Right lobe of liver (tissue), 6 donors: ENCODE measurements at regions of chr14 and their contacts with region 1.

Region 1: DNA sequence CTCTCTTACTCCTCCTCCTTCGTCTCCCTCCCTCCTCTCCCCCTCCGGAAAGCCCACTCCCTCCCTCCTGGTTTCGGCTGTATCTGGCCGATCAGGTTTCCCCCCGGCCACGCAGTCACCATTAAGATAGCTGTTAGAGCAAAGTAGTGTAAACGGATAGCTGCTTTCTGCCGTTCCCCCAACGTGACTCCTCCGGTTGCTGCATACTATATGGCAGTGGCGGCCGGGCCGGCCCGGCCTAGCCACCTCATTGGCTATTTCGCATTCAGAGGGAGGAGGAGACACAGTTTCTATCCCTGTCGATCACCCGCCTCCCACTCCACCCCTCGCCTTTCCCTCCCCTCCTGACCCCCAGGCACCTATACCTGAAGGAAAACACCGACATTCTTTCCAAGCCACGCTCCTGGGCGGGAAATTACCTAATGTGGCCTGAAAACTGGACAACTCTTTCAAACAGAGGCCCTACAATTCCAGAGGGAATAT is at the start of gene SIX4:
- DNase-seq: peak; percentile 48 to 59 (median 49)
- ATAC-seq: peak; percentile 57 to 81 (median 72)
- H3K4me3 ChIP-seq: peak within 1 kb of the TSS; percentile 53 to 56 (median 56)
- H3K27ac ChIP-seq: no peak within 1 kb of the TSS
- H3K4me1 ChIP-seq: peaks cover 0 to 13% (median 5%) of the 10 kb centered on the region in 4 donors
- H3K27me3 ChIP-seq: no peaks in the 10 kb centered on the region
- CTCF ChIP-seq: no peak
- POLR2A ChIP-seq: no peak
- total RNA-seq, gene SIX4: 0.04 to 0.43 (median 0.23) TPM in 5 of 6 experiments, not detected in the other

Region 2: DNA sequence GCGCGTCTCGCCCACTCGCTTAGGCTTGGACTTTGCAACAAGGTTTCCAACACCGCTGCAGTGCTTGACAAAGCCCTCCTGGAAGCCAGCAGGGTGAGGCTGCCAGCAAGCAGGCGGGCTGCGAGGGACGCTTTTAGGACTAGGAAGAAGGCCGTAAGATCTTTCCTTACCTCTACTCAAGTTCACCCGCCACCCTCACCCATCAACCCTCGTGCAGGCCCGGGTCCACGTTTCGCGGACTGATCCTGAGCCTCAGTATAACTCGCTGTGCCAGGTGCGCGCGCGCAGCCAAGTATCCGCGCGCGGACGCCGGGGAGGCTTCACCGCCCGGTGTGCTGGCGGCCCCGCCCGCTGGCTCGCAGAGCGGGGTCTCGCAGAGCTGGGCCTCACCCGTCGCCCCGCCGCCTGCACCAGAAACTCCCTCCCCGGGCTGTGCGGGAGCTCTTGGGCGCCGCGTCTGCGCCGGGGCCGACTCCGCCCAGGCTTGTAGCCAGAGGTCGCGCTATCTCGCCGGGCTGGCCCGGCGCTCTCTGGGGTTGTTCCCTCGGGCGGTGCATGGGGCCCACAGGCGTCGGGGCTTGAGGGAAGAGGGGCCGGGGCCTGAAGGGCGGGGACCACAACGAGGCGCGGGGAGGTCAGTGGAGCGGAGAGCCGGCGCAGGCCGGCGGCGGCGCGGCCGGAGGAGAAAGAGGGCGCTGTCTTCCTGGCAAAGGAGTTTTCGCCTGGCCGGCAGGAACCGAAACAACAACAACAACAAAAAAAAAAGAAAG is 67.3 kb before region 1 on chr14:
- intact Hi-C with region 1: loop called in 1 of 2 experiments (anchors 10 kb)
- DNase-seq: peak; percentile 59 to 68 (median 64)
- ATAC-seq: peak; percentile 86 to 92 (median 88)
- H3K4me3 ChIP-seq: peak overlapping the region; percentile 43 to 64 (median 59)
- H3K27ac ChIP-seq: no peak overlapping the region
- H3K4me1 ChIP-seq: peaks cover 0 to 19% (median 0%) of the 10 kb centered on the region in 4 donors
- H3K27me3 ChIP-seq: peaks cover 17 to 26% of the 10 kb centered on the region in 2 donors
- CTCF ChIP-seq: peak; percentile 19 to 48 (median 47)
- POLR2A ChIP-seq: no peak

Region 3: GRCh38 chr14:60884134-60884533 is 160.0 kb after region 1 on chr14:
- intact Hi-C with region 1: no loop called
- DNase-seq: no peak
- ATAC-seq: no peak
- H3K4me3 ChIP-seq: no peak overlapping the region
- H3K27ac ChIP-seq: no peak overlapping the region
- H3K4me1 ChIP-seq: no peaks in the 10 kb centered on the region
- H3K27me3 ChIP-seq: no peaks in the 10 kb centered on the region
- CTCF ChIP-seq: no peak
- POLR2A ChIP-seq: no peak